SK-N-SH (cell line): ENCODE measurements at regions of chr15 and their contacts with region 1.

Region 1: DNA sequence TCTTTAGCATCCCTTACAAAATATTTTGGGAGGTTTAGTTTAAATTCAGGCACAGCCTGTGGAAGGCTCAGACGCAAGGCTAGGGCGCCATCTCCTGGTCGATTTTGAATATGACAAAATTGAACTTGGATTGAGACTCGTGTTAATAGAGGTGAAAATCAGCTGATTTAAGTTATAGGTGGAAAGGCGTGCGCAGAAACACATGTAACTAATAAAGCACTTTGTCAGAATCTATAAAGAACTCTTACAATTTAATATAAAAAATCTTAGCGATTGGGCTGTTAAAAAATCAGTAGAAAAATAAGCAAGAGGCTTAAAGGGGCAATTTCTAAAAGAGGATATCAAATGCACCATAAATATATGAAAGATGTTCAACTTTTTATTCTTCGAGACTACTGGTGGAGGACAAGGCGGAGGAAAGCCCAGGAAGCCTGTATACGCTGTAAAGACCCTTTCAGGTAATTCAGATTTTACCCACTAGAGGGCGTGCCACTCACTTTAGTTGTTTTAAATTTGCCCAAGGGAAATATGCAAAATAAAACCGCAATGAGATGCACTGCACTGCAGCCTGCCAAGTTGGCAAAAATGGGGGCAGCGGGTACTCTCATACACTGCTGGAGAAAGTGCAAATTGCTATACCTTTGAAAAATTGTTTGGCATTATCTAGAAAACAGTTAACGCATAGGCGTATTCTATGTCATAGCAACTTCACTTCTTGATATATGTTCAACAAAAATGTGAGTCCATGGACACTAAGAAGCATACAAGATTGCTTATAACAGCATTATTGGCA is 64.7 kb downstream of the SLC30A4 start:
- DNase-seq: peak; percentile 74
- H3K4me3 ChIP-seq: peak overlapping the region; percentile 50 to 67
- H3K27ac ChIP-seq: peak overlapping the region; percentile 76 to 94
- H3K4me1 ChIP-seq: peaks cover 10 to 21% of the 10 kb centered on the region in 2 experiments
- H3K27me3 ChIP-seq: no peaks in the 10 kb centered on the region
- CTCF ChIP-seq: peak; percentile 78
- EP300 ChIP-seq: no peak; a peak in 1 of 4 replicates
- RAD21 ChIP-seq: peak; percentile 92

Region 2: GRCh38 chr15:44066316-44066740 is 1391.5 kb before region 1 on chr15:
- CTCF ChIA-PET with region 1: no interaction called
- POLR2A ChIA-PET with region 1: no interaction called
- DNase-seq: peak; percentile 8
- H3K4me3 ChIP-seq: no peak overlapping the region
- H3K27ac ChIP-seq: no peak overlapping the region; a peak in 1 of 4 replicates
- H3K4me1 ChIP-seq: no peaks in the 10 kb centered on the region; a peak in 1 of 4 replicates
- H3K27me3 ChIP-seq: no peaks in the 10 kb centered on the region
- CTCF ChIP-seq: peak; percentile 80
- EP300 ChIP-seq: no peak
- RAD21 ChIP-seq: peak; percentile 64

Region 3: GRCh38 chr15:45187894-45188830 is 269.7 kb before region 1 on chr15 and contains the start of gene SHF:
- CTCF ChIA-PET with region 1: interaction called, 11 read pairs
- POLR2A ChIA-PET with region 1: no interaction called
- DNase-seq: peak; percentile 93
- H3K4me3 ChIP-seq: peak within 1 kb of the TSS; percentile 74 to 78
- H3K27ac ChIP-seq: peak within 1 kb of the TSS in 1 of 2 experiments; percentile 87; a peak in 2 of 4 replicates
- H3K4me1 ChIP-seq: peaks cover 12 to 42% of the 10 kb centered on the region in 2 experiments; a peak in 3 of 4 replicates
- H3K27me3 ChIP-seq: no peaks in the 10 kb centered on the region; the same call in 1 of the 2 replicates
- CTCF ChIP-seq: no peak
- EP300 ChIP-seq: no peak
- RAD21 ChIP-seq: no peak
- polyA plus RNA-seq, gene SHF: 4.4 and 5.5 TPM in 2 replicates

Region 4: GRCh38 chr15:45306105-45306504 is 151.7 kb before region 1 on chr15:
- CTCF ChIA-PET with region 1: interaction called, 14 read pairs
- POLR2A ChIA-PET with region 1: no interaction called
- DNase-seq: no peak
- H3K4me3 ChIP-seq: no peak overlapping the region
- H3K27ac ChIP-seq: no peak overlapping the region
- H3K4me1 ChIP-seq: no peaks in the 10 kb centered on the region
- H3K27me3 ChIP-seq: no peaks in the 10 kb centered on the region; the same call in 1 of the 2 replicates
- CTCF ChIP-seq: no peak
- EP300 ChIP-seq: no peak
- RAD21 ChIP-seq: no peak

Region 5: DNA sequence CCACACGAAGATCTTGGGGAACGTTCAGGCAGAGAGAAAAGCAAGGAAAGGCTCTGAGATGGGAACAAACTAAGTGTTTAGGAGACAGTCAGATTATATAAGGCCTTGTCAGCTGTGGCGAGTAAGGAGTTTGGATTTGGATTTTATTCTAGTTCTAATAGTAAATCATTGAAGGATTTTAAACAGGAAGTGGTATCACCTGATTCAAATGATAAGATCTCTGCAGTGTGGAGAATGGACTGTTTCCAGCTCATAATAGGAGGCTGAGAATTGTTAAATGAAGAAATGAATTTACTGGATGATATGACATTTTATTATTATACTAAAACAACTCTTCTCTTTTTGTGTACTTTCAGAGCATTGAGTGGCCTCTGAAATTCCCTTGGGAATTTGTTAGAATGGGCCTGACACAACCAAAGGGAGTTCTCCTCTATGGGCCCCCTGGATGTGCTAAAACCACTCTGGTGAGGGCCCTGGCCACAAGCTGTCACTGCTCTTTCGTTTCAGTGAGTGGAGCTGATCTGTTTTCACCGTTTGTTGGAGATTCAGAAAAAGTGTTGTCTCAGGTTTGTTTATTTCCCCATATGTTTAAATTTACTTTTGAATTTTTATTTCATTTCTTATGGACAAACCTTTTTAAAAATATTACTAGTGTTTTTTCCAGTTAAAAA is 43.5 kb before region 1 on chr15:
- CTCF ChIA-PET with region 1: interaction called, 10 read pairs
- POLR2A ChIA-PET with region 1: no interaction called
- DNase-seq: no peak
- H3K4me3 ChIP-seq: no peak overlapping the region
- H3K27ac ChIP-seq: 0 out of 4 replicates have a peak overlapping the region, but pooled peaks of 1 of the 2 experiments have one; percentile 8
- H3K4me1 ChIP-seq: peaks cover 0 to 2% of the 10 kb centered on the region in 2 experiments; a peak in 1 of 4 replicates
- H3K27me3 ChIP-seq: no peaks in the 10 kb centered on the region
- CTCF ChIP-seq: no peak
- EP300 ChIP-seq: no peak
- RAD21 ChIP-seq: no peak

Region 6: GRCh38 chr15:45489690-45490238 is 31.9 kb after region 1 on chr15:
- CTCF ChIA-PET with region 1: interaction called, 11 read pairs
- POLR2A ChIA-PET with region 1: no interaction called
- DNase-seq: no peak
- H3K4me3 ChIP-seq: no peak overlapping the region
- H3K27ac ChIP-seq: no peak overlapping the region
- H3K4me1 ChIP-seq: no peaks in the 10 kb centered on the region
- H3K27me3 ChIP-seq: no peaks in the 10 kb centered on the region
- CTCF ChIP-seq: no peak
- EP300 ChIP-seq: no peak
- RAD21 ChIP-seq: no peak

Region 7: GRCh38 chr15:45618813-45619212 is 161.0 kb after region 1 on chr15:
- CTCF ChIA-PET with region 1: interaction called, 131 read pairs
- POLR2A ChIA-PET with region 1: no interaction called
- DNase-seq: peak; percentile 43
- H3K4me3 ChIP-seq: no peak overlapping the region
- H3K27ac ChIP-seq: no peak overlapping the region
- H3K4me1 ChIP-seq: no peaks in the 10 kb centered on the region
- H3K27me3 ChIP-seq: no peaks in the 10 kb centered on the region
- CTCF ChIP-seq: no peak; the same call in 1 of the 2 replicates
- EP300 ChIP-seq: no peak
- RAD21 ChIP-seq: no peak

Region 8: DNA sequence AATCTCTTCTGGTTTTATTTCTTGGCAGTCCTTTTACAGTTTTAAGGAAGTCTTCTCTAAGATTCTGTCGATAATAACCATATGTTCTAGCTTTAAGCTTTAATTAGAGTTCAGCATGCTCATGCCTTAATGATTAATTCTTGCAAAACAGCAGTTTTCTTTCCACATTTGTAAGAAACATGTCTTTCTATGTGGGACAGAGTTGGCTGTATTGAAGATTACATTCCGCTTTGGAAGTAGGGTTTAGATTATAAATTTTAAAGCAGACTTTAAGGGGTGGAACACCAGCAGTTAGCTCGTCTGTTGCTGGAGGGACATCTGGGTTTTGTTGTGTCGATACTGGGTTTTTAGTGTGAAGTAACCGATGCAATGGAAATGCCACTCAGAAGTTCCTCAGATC is 212.3 kb after region 1 on chr15:
- CTCF ChIA-PET with region 1: no interaction called
- POLR2A ChIA-PET with region 1: no interaction called
- DNase-seq: no peak
- H3K4me3 ChIP-seq: no peak overlapping the region
- H3K27ac ChIP-seq: no peak overlapping the region
- H3K4me1 ChIP-seq: no peaks in the 10 kb centered on the region
- H3K27me3 ChIP-seq: no peaks in the 10 kb centered on the region
- CTCF ChIP-seq: no peak
- EP300 ChIP-seq: no peak
- RAD21 ChIP-seq: no peak

Region 9: DNA sequence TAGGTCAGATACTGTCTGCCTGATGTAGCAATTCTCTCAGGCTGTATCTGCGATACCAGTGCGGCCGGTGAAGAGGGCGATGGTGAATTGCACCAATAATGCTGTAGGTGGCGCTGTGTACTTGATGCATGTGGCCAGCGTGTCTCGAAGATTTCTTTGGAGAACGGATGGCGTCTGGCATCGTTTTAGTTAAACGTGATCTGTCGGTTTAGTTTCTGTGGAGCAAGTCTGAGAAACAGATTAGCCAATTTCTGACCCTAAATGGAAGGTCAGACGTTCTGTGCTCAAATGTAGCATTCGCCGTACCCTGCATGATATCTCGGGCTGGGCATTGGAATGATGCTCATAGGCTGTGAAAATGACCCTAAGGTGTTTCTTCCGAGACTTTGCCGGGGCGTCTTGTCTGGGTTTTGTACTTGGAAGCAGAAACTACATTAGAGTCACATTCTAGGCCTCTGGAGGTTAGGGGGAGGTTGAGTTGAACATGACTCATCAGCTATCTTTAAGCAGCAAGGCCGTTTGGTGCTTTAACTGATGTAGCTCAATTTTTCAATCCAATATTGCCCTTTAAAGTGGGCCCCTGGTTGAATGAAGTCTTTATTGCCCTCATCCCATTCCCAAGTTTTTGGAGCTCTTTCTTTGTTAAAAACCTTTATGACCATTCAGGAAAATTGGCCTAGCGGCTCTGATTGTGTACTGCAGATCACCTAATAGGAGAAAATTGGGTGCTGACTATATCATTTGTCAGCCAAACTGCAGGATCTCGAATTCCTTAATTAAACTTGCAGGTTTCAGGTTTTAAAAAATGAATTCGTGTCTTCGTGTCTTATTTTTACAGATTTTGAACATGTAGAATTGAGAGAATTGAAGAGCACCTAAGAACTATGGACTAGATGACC is 257.0 kb after region 1 on chr15:
- CTCF ChIA-PET with region 1: no interaction called
- POLR2A ChIA-PET with region 1: no interaction called
- DNase-seq: peak; percentile 56
- H3K4me3 ChIP-seq: no peak overlapping the region
- H3K27ac ChIP-seq: no peak overlapping the region
- H3K4me1 ChIP-seq: peaks cover 0 to 3% of the 10 kb centered on the region in 2 experiments; a peak in 2 of 4 replicates
- H3K27me3 ChIP-seq: no peaks in the 10 kb centered on the region
- CTCF ChIP-seq: peak; percentile 83
- EP300 ChIP-seq: no peak
- RAD21 ChIP-seq: peak; percentile 90

Region 10: GRCh38 chr15:46080016-46080415 is 622.2 kb after region 1 on chr15:
- CTCF ChIA-PET with region 1: no interaction called
- POLR2A ChIA-PET with region 1: no interaction called
- DNase-seq: peak; percentile 61
- H3K4me3 ChIP-seq: no peak overlapping the region
- H3K27ac ChIP-seq: peak overlapping the region in 1 of 2 experiments; percentile 99; a peak in 2 of 4 replicates
- H3K4me1 ChIP-seq: peaks cover 0 to 17% of the 10 kb centered on the region in 2 experiments; a peak in 3 of 4 replicates
- H3K27me3 ChIP-seq: no peaks in the 10 kb centered on the region
- CTCF ChIP-seq: no peak
- EP300 ChIP-seq: peak in 1 of 2 experiments; percentile 89; a peak in 2 of 4 replicates
- RAD21 ChIP-seq: peak; percentile 35